PC-9 (cell line): ENCODE measurements at regions of chr2 and their contacts with region 1.

Region 1: DNA sequence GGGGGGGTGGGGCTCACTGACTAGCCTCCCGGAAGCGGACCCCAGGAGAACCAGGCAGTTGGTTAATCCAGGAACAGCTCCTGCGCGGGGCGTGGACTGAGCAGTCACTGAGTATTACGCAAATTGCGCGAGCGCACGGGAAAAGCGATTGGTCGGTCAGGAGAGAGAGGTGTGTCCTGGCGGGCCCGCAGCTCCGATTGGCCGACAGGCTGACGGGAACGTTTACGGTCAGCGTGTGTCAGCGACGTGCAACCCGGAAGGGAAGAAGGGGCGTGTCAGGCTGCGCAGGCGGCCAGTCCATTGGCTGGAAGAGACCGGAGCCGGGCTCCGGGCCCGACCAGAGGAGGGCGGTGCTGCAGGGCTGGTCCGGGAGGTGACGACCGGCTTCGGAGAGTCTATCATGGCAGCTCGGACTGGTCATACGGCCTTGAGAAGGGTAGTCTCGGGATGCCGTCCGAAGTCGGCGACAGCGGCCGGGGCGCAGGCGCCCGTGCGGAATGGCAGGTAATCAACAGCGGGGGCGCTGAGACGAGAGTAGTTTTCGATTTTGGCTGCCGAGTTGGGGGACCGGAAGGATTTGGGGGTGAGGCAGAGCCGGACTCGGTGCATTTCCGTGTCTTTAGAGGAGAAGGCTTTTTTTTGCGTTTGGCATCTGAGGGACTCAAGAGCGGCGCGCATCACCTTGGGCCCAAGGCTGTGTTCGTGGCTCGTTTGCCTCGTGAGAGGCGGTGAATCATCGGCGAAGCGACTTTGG is at the start of gene COQ10B:
- DNase-seq: peak; percentile 98
- H3K4me3 ChIP-seq: peak within 1 kb of the TSS; percentile 97
- H3K27ac ChIP-seq: peak within 1 kb of the TSS; percentile 97
- H3K4me1 ChIP-seq: peaks cover 10% of the 10 kb centered on the region
- H3K27me3 ChIP-seq: no peaks in the 10 kb centered on the region
- CTCF ChIP-seq: no peak; the same call in 1 of the 2 replicates
- total RNA-seq, gene COQ10B: 14.8 and 18.1 TPM in 2 replicates

Region 2: DNA sequence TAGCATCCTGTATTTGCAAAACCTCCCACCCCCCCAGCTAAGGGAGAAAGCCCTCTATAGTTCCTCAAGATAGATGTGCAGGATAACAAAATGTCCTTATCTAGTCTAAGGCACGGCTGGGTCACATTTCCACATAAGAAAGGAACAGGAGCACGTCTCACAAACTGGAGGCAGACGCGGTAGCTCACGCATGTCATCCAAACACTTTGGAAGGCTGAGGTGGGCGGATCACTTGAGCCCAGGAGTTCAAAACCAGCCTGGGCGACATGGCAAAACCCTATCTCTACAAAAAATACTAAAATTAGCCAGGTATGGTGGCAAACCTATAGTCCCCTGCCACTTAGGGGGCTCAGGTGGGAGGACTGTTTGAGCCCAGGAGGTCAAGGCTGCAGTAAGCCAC is 27.8 kb before region 1 on chr2:
- CTCF ChIA-PET with region 1: no interaction called
- POLR2A ChIA-PET with region 1: interaction called, 33 read pairs
- intact Hi-C with region 1: no loop called
- DNase-seq: no peak
- H3K4me3 ChIP-seq: no peak overlapping the region
- H3K27ac ChIP-seq: no peak overlapping the region
- H3K4me1 ChIP-seq: no peaks in the 10 kb centered on the region
- H3K27me3 ChIP-seq: no peaks in the 10 kb centered on the region
- CTCF ChIP-seq: no peak

Region 3: DNA sequence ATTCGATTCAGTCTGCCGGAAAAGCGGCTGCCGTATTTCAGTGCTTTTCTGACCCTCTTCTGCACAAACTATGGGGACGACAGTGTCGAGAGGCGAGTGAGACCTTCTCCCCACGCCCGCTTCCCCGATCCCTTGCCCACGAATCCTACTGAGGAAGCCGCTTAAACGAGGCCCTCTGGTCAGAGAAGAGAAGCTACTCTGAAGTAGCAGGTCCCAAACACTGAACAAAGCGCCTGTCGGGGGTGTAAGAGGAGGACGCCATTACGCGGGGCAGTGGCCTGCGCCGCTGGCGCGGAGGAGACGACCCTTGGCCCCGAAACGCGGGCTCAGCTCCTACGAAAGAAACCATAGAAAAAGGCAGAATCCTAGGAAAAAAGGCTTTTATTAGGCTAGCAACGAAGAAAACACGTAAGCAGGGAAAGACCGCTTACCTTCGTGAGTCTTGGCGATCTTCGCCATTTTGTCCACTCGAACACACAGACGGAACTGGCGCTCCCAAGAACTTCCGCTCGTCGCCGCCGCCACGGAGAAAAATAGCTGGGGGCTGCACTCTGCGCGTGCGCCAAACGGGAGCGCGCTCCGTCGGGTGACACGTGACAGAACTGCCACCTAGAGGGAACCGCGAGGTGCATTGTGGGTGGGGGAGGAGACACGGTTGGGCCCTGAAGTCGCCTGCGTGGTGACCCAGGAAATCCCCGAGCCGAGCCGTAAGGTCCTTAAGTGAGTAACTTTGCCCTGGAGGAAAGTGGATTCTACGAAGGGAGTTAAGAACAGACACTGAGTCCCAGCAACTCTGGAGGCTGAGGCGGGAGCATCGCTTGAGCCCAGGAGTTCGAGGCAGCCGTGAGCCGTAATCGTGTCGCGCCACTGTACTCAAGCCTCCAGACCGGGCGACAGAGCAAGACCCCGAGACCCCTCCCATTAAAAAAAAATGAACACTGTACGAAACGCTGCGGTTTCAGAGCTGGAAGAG is 18.5 kb before region 1 on chr2 and contains the start of gene SF3B1:
- CTCF ChIA-PET with region 1: interaction called, 3 read pairs
- POLR2A ChIA-PET with region 1: interaction called, 7 read pairs
- intact Hi-C with region 1: loop called (anchors 1 kb)
- DNase-seq: peak; percentile 93 to 97
- H3K4me3 ChIP-seq: peak within 1 kb of the TSS; percentile 77
- H3K27ac ChIP-seq: peak within 1 kb of the TSS; percentile 80
- H3K4me1 ChIP-seq: peaks cover 24% of the 10 kb centered on the region
- H3K27me3 ChIP-seq: no peaks in the 10 kb centered on the region
- CTCF ChIP-seq: no peak
- total RNA-seq, gene SF3B1: 127 and 156 TPM in 2 replicates

Region 4: DNA sequence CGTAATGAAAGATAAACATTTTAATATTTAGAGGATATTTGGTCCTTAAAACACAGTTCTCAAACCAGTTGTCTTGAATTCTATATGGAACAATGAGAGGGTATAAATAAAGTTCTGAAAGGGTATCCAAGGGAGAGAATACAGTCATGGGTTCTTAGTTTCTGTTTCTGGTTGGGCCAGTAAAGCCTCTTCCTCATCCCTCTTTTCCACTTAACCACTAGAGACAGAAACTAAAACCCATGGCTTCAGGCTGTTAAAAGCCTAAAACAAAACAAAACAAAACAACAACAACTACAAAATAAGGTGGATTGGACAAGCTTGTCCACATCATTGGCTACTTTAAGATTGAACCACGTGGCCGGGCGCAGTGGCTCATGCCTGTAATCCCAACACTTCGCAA is 18.8 kb after region 1 on chr2:
- CTCF ChIA-PET with region 1: no interaction called
- POLR2A ChIA-PET with region 1: interaction called, 10 read pairs
- intact Hi-C with region 1: no loop called
- DNase-seq: no peak
- H3K4me3 ChIP-seq: no peak overlapping the region
- H3K27ac ChIP-seq: no peak overlapping the region
- H3K4me1 ChIP-seq: no peaks in the 10 kb centered on the region
- H3K27me3 ChIP-seq: no peaks in the 10 kb centered on the region
- CTCF ChIP-seq: no peak

Region 5: DNA sequence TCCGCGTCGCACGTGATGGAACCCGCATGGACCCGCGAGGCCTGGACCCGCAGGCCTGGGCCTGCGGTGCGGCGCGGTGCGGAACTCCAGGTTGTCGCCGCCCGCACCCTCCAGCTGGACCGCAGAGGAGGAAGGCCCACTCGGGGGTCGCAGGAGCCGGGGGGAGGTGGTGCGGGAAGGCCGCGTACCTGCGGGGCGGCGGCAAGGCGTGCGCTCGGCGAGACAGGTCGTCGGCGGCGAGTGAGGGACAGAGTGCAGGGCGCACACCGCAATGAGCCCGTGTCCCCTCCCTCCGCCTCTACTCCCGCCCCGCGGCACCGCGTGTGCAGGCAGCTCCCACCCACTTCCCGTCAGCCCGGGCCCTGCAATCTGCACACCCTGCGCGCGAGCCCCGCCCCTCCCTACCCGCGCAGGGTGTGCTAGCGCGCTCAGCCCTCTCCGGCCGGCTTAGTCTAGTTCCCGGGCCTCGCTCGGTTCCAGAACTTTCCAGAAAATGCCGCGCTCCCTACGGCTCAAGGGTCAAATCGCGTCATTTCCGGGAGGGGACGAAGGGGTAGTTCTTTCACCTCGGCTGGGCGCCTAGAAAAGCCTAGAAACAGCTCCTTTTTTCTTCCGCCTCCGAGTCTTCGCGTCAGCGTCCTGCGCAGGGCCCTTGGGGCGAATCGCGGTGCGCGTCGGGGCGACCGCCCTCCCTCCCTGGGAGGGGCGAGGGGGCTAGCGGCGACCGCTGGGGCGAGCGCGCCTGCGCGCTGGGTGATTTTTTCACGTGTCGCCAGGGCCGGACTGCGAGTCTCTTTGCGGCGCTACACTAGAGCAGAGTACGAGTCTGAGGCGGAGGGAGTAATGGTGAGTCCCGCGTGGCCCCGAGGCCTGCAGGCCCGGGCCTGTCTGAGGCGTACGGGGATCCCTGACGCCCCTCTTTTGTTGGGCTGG is 46.5 kb after region 1 on chr2 and contains the starts of genes HSPD1 and HSPE1:
- CTCF ChIA-PET with region 1: interaction called, 4 read pairs
- POLR2A ChIA-PET with region 1: no interaction called
- intact Hi-C with region 1: loop called (anchors 2 kb)
- DNase-seq: peak; percentile 97 to 98
- H3K4me3 ChIP-seq: peak within 1 kb of the TSS; percentile 99
- H3K27ac ChIP-seq: peak within 1 kb of the TSS; percentile 74
- H3K4me1 ChIP-seq: peaks cover 43% of the 10 kb centered on the region
- H3K27me3 ChIP-seq: no peaks in the 10 kb centered on the region
- CTCF ChIP-seq: no peak
- total RNA-seq, gene HSPD1: 532 and 557 TPM in 2 replicates
- total RNA-seq, gene HSPE1: 113 and 219 TPM in 2 replicates

Region 6: DNA sequence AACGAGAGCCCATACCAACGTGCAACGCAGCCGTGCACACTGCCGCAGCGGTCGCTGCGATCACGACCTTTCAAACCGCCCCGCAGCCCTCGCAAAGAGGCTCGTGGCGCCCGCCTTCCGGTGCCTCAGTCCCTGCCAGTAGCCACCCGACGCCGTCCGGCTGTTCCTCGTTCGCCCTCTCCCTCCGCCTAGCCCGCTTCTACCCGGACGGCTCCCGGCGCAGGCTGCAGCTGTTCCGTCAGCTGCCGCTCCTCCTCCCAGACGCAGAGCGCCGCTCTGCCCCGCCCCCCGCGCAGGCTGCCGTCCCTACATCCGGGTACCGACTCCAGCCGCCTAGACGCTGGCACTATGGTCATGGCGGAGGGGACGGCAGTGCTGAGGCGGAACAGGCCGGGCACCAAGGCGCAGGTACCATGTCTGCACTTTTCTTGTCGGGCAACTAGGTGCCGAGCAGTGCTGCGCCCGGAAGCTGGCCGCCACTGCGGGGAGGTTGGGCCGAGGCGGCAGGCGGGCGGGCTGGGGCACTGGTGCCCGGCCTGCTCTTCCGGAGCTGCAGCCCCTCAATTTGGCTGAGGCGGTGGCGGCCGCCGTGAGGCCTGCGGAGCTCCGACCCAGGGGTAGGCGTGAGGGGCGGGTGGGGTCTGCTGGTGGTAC is 62.5 kb after region 1 on chr2 and contains the start of gene MOB4:
- CTCF ChIA-PET with region 1: no interaction called
- POLR2A ChIA-PET with region 1: no interaction called
- intact Hi-C with region 1: loop called (anchors 5 kb)
- DNase-seq: peak; percentile 80 to 95
- H3K4me3 ChIP-seq: peak within 1 kb of the TSS; percentile 95
- H3K27ac ChIP-seq: peak within 1 kb of the TSS; percentile 50
- H3K4me1 ChIP-seq: peaks cover 24% of the 10 kb centered on the region
- H3K27me3 ChIP-seq: no peaks in the 10 kb centered on the region
- CTCF ChIP-seq: no peak
- total RNA-seq, gene MOB4: 19.9 and 20.1 TPM in 2 replicates